Dorsolateral prefrontal cortex (tissue), 120 donors: ENCODE measurements at regions of chr13 and their contacts with region 1.

Region 1: GRCh38 chr13:31161828-31162590 is at the start of gene HSPH1:
- DNase-seq: peak; percentile 96 to 99 (median 98)
- H3K4me3 ChIP-seq: peak within 1 kb of the TSS; percentile 68 to 100 (median 91)
- H3K27ac ChIP-seq: peak within 1 kb of the TSS; percentile 88 to 100 (median 100)
- H3K27me3 ChIP-seq: no peaks in the 10 kb centered on the region
- CTCF ChIP-seq: peak in 23 of 56 donors; percentile 3 to 55 (median 20)
- total RNA-seq, gene HSPH1: 90.5 to 959 (median 242) TPM

Region 2: GRCh38 chr13:31044377-31045285 is 117.4 kb before region 1 on chr13:
- intact Hi-C with region 1: loop called in 1 of 2 experiments (anchors 10 kb)
- DNase-seq: peak; percentile 70 to 88 (median 84)
- H3K4me3 ChIP-seq: no peak overlapping the region
- H3K27ac ChIP-seq: peak overlapping the region in 3 of 59 donors; percentile 14 to 38 (median 24)
- H3K27me3 ChIP-seq: peaks cover 0 to 5% (median 0%) of the 10 kb centered on the region in 45 donors
- CTCF ChIP-seq: peak; percentile 90 to 98 (median 96)

Region 3: DNA sequence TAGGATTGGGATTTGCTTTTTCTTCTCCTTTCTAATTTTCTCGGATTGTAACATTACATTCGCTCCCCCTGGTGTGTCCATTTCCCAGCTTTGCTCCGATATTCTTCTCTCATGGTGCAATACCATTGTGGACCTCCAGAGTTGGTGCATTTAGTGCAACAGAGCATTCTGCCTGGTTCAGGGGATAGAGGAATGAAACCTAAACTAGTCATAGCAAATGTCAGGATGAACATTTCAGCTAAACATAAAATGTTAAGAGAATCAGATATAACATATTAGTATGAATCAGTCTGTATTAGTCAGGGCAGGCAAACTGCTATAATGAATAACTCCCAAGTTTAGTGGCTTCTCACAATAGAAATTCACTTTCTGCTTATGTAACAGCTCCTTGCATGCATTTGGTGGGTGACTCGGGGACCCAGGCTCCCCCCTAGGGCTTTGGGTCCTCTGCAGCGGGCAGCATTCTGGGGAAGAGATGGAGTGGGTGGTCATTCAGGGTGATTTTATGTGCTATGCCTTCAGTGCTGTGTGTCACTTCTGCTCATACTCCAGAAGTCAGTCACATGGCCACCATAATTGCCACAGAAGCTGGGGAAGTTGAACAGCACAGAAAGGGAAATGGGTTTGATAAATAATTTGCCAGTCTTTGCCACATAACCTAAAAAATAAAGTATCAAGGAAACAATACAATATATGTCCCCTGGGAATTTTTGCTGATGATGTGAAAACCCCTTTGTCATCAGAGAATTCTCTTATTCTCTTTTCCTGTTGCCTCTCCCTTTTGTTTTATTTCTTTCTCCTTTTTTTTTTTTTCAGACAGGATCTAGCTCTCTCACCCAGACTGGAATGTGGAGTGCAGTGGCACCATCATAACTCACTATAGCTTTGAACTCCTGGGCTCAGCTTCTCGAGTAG is 111.3 kb before region 1 on chr13:
- intact Hi-C with region 1: loop called (anchors 5 to 10 kb)
- DNase-seq: no peak
- H3K4me3 ChIP-seq: no peak overlapping the region
- H3K27ac ChIP-seq: peak overlapping the region in 26 of 59 donors; percentile 5 to 77 (median 27)
- H3K27me3 ChIP-seq: no peaks in the 10 kb centered on the region
- CTCF ChIP-seq: peak in 22 of 56 donors; percentile 6 to 47 (median 22)

Region 4: DNA sequence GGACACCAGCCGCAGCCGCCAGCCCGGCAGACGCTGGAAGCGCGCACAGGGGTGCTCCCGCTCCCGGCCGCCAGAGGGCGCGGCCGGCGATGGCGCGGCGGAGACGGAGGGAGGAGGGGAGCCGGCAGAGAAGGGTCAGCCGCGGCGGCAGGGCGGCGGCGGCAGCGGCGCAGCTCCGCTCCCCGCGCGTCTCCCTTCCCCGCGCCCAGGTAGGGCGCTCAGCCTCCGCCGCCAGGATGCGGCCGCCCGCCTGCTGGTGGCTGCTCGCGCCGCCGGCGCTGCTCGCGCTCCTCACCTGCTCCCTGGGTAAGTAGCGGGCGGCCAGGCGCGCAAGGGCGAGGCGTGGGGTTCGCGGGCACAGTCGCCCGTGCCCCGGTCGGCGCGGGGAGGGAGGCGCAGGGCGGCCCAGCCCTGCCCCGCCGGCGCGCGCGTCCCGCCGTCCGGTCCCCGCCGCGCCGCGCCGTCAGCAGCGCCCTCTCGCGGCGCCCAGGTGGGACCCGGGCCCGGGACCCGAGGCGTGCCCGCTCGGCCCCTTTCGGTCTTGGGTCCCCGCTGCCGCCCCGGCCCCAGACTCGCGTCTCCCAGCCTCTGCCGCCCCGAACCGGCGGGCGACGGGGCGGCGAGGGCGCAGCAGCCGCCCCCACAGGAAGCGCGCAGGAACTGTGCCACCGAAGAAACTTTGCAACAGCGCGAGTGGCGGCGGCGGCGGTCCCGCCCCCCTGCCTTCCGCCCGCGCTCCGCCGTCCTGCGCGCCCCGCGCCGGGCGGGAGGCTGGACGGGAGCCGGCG is 38.0 kb after region 1 on chr13 and contains the start of gene B3GLCT:
- intact Hi-C with region 1: loop called (anchors 2 to 5 kb)
- DNase-seq: peak in 9 of 10 donors; percentile 32 to 88 (median 60)
- H3K4me3 ChIP-seq: peak within 1 kb of the TSS; percentile 41 to 85 (median 74)
- H3K27ac ChIP-seq: peak within 1 kb of the TSS in 58 of 59 donors; percentile 58 to 98 (median 92)
- H3K27me3 ChIP-seq: no peaks in the 10 kb centered on the region
- CTCF ChIP-seq: peak in 55 of 56 donors; percentile 60 to 97 (median 83)
- total RNA-seq, gene B3GLCT: 7.6 to 22.2 (median 13.1) TPM